Activated CD4-positive, alpha-beta memory T cell treated with anti-CD3 and anti-CD28 coated beads for 36 hours (primary cell): ENCODE measurements at regions of chr12 and their contacts with region 1.

Region 1: DNA sequence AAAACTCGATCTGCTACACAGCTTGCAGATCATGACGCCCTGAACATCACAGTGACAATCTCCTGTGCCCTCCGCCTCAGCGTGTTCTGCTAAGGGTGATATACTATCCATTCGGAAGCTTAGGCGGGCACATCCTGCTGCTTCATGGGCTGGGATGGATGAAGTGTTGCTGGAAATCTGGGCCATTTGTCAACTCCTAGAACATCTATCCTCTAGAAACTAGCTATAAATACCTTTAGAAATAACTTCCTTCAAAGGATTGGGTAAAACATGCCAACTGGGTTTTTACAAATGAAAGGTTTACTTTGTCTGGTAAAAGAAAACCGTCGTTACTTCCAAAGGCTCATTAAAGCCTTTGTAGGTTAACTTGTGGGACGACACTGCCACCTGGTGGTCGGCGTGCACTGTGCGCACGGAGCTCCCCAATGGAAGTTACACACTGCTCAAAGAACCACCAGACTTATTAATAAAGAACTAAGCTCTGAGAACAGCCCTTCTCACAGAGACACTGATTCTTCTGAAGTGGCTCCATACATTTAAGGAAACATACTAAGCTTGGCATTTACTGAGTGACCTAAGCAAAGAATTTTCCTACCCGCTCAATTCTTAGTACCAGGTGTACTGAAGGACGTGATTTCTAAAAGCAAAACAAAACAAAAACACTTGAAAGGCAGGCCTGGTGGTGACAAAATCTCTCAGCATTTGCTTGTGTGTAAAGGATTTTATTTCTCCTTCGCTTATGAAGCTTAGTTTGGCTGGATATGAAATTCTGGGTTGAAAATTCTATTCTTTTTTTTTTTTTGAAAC is 21.6 kb upstream of the CACNA2D4 start:
- DNase-seq: peak; percentile 91
- H3K4me3 Mint-ChIP-seq: no peak overlapping the region
- H3K27ac Mint-ChIP-seq: no peak overlapping the region
- H3K4me1 Mint-ChIP-seq: peaks cover 4% of the 10 kb centered on the region
- H3K27me3 Mint-ChIP-seq: no peaks in the 10 kb centered on the region

Region 2: GRCh38 chr12:1453810-1454209 is 486.2 kb before region 1 on chr12:
- CTCF ChIA-PET with region 1: no interaction called
- POLR2A ChIA-PET with region 1: no interaction called
- intact Hi-C with region 1: no loop called
- DNase-seq: no peak
- H3K4me3 Mint-ChIP-seq: no peak overlapping the region
- H3K27ac Mint-ChIP-seq: no peak overlapping the region
- H3K4me1 Mint-ChIP-seq: no peaks in the 10 kb centered on the region
- H3K27me3 Mint-ChIP-seq: no peaks in the 10 kb centered on the region

Region 3: GRCh38 chr12:1650260-1650977 is 289.6 kb before region 1 on chr12:
- CTCF ChIA-PET with region 1: interaction called, 66 read pairs
- POLR2A ChIA-PET with region 1: no interaction called
- intact Hi-C with region 1: loop called (anchors 1 kb)
- DNase-seq: no peak
- H3K4me3 Mint-ChIP-seq: no peak overlapping the region
- H3K27ac Mint-ChIP-seq: no peak overlapping the region
- H3K4me1 Mint-ChIP-seq: no peaks in the 10 kb centered on the region
- H3K27me3 Mint-ChIP-seq: peaks cover 10% of the 10 kb centered on the region

Region 4: DNA sequence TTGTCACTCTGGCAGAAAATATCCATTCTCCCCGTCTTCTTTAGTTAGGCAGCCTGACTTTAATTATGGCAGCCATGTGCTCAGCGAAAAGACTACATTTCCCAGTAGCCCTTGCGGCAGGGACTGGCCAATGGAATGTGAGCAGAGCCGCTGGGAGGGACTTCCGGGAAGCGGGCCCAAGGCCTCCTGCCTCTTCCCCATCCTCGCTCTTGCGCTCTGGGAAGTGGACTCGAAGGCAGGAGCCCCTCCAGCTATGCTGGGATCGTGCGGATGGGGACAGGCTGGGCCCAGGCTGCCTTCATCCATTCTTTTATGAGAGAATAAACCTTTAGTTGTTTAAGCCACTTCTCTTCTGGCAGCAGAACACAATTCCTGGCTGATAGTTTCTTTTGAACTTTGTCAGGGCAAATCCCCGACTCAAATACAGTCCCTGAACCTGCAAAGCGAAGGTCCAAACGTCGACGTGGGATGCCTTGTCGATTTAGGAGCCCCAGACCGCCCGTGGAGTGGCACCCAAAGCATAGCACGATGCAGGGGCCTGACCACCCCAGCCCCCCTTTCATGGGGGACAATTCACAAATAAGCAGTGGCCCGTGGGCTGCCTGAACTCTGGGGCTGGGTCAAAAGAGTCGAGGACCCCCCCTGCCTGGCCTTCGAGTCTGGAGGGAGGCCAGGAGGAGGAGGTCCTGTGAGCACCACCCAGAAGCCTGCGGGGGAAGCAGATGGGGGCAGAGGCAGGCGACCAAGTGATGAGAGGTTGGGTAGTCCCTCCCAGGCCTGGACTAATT is 135.3 kb before region 1 on chr12:
- CTCF ChIA-PET with region 1: interaction called, 21 read pairs
- POLR2A ChIA-PET with region 1: no interaction called
- intact Hi-C with region 1: no loop called
- DNase-seq: peak; percentile 92
- H3K4me3 Mint-ChIP-seq: no peak overlapping the region
- H3K27ac Mint-ChIP-seq: peak overlapping the region; percentile 70
- H3K4me1 Mint-ChIP-seq: peaks cover 6% of the 10 kb centered on the region
- H3K27me3 Mint-ChIP-seq: no peaks in the 10 kb centered on the region

Region 5: DNA sequence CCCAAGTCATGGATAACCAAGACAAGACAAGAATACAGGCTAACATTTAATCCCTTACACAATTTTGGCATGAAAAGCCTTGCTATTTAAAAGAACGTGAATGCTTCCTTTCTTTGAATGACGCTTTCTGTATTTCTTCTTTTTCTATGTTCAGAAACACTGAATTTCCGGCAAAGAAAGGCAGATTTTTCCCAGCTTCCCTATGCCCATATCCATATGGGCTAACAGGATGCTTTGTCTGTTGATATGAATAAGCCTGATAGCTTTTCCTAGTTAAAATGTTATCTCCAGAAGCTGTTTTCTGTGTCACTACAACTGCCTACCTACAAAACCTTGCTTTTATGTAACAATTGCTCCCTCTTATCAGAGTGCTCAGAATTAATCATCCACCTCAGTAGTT is 16.7 kb after region 1 on chr12:
- CTCF ChIA-PET with region 1: interaction called, 16 read pairs
- POLR2A ChIA-PET with region 1: no interaction called
- intact Hi-C with region 1: no loop called
- DNase-seq: no peak
- H3K4me3 Mint-ChIP-seq: no peak overlapping the region
- H3K27ac Mint-ChIP-seq: no peak overlapping the region
- H3K4me1 Mint-ChIP-seq: no peaks in the 10 kb centered on the region
- H3K27me3 Mint-ChIP-seq: no peaks in the 10 kb centered on the region

Region 6: GRCh38 chr12:2034633-2035430 is 94.8 kb after region 1 on chr12:
- CTCF ChIA-PET with region 1: interaction called, 9 read pairs
- POLR2A ChIA-PET with region 1: no interaction called
- intact Hi-C with region 1: loop called (anchors 2 kb)
- DNase-seq: peak; percentile 89
- H3K4me3 Mint-ChIP-seq: peak overlapping the region; percentile 62
- H3K27ac Mint-ChIP-seq: no peak overlapping the region
- H3K4me1 Mint-ChIP-seq: peaks cover 10% of the 10 kb centered on the region
- H3K27me3 Mint-ChIP-seq: peaks cover 26% of the 10 kb centered on the region

Region 7: DNA sequence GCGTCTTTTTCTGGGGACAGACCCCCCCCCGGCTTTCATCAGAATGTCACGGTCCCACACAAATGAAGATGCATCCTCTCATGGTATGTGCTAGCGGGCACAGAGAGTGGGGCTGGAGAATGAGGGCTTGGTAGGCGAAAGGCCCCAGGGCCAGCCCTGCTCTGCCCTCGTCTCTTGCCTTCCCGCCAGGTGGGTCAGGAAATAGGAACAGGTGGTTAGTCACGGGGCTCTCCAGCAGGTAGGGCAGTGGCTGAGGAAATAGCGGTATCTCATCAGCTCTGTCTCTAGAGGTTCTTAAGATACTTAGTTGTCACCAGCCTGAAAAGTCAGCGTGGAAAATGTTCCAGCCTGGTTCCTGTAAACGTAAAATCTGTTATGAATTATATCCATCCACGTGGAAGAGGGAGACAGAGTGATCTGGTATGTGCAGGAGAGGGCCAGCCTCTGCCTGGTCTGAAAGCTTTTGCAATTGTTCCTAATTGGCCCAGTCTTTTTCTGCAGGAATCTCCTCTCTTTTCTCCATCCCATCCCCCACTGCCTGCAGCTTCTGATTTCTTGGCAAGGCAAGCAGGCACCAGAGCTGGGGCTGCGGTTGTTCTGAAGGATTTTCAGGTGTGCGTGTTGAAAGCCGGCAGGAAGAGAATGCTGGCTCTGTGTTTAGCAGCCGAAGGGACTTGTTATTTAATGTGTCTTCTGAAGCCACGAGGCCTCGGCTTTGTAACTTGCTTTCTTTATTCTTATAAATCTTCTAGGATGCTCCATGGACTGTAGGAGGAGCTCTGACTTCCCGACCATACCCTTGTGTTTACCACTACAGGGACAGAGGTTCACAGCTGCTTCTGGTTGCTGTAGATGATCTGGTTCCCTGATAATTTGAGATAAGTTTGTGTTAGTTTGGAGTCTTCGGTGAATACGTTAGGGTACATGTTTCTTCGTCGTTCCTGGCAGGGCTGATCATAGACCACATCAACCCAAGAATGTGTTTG is 243.8 kb after region 1 on chr12:
- CTCF ChIA-PET with region 1: no interaction called
- POLR2A ChIA-PET with region 1: no interaction called
- intact Hi-C with region 1: no loop called
- DNase-seq: no peak
- H3K4me3 Mint-ChIP-seq: no peak overlapping the region
- H3K27ac Mint-ChIP-seq: no peak overlapping the region
- H3K4me1 Mint-ChIP-seq: peaks cover 2% of the 10 kb centered on the region
- H3K27me3 Mint-ChIP-seq: peaks cover 3% of the 10 kb centered on the region